Activated CD4-positive, alpha-beta T cell treated with anti-CD3 and anti-CD28 coated beads for 36 hours (primary cell): ENCODE measurements at regions of chr2 and their contacts with region 1.

Region 1: GRCh38 chr2:171347591-171348032 is 86.2 kb downstream of the METTL8 start:
- DNase-seq: peak; percentile 55
- ATAC-seq: peak; percentile 85
- H3K4me3 Mint-ChIP-seq: no peak overlapping the region
- H3K27ac Mint-ChIP-seq: peak overlapping the region; percentile 82
- H3K4me1 Mint-ChIP-seq: peaks cover 34% of the 10 kb centered on the region
- H3K27me3 Mint-ChIP-seq: no peaks in the 10 kb centered on the region

Region 2: GRCh38 chr2:171244970-171245782 is 102.4 kb before region 1 on chr2:
- CTCF ChIA-PET with region 1: no interaction called
- POLR2A ChIA-PET with region 1: no interaction called
- intact Hi-C with region 1: no loop called
- DNase-seq: no peak
- ATAC-seq: no peak
- H3K4me3 Mint-ChIP-seq: no peak overlapping the region
- H3K27ac Mint-ChIP-seq: no peak overlapping the region
- H3K4me1 Mint-ChIP-seq: peaks cover 42% of the 10 kb centered on the region
- H3K27me3 Mint-ChIP-seq: no peaks in the 10 kb centered on the region

Region 3: GRCh38 chr2:171325886-171326585 is 21.6 kb before region 1 on chr2:
- CTCF ChIA-PET with region 1: interaction called, 9 read pairs
- POLR2A ChIA-PET with region 1: no interaction called
- intact Hi-C with region 1: loop called in 1 of 2 experiments (anchors 1 kb)
- DNase-seq: no peak
- ATAC-seq: peak; percentile 89
- H3K4me3 Mint-ChIP-seq: peak overlapping the region; percentile 35
- H3K27ac Mint-ChIP-seq: peak overlapping the region; percentile 93
- H3K4me1 Mint-ChIP-seq: peaks cover 54% of the 10 kb centered on the region
- H3K27me3 Mint-ChIP-seq: no peaks in the 10 kb centered on the region

Region 4: DNA sequence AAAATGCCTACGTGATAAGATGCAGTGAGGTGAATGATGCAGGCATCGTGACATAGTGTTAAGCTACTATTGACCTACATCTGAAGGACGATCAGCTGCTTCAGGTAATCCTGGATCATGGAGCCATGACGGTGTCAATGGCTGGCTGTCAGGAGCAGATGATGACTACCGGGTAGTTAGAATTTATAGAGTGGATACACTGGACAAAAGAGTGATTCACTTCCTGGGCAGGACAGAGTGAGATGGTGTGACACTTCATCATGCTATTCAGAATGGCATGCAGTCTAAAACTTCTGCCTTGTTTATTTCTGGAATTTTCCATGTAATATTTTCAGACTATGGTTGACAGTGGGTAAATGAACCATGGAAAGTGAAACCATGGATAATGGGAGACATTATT is 56.6 kb after region 1 on chr2:
- CTCF ChIA-PET with region 1: no interaction called
- POLR2A ChIA-PET with region 1: no interaction called
- intact Hi-C with region 1: loop called in 1 of 2 experiments (anchors 5 kb)
- DNase-seq: no peak
- ATAC-seq: no peak
- H3K4me3 Mint-ChIP-seq: no peak overlapping the region
- H3K27ac Mint-ChIP-seq: no peak overlapping the region
- H3K4me1 Mint-ChIP-seq: peaks cover 36% of the 10 kb centered on the region
- H3K27me3 Mint-ChIP-seq: no peaks in the 10 kb centered on the region